PC-9 (cell line): ENCODE measurements at regions of chr7 and their contacts with region 1.

Region 1: DNA sequence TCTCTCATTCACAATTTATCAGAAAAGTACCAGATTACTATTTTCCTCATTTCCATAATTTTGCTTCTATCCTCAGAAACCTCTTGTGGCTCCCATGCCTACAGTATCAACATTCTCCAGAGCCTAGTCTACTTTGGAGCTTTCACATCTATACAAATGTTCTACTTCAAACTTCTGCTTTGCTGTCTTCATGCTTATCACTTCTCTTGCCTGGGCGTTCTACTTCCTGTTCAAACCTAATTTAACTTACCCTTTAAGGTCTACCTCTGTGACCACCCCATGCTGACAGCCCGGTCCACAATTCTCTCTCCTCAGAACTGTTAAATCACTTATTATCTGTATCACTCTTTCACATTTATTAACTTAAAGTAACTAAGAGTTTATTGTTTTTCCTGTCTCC is 6.1 kb upstream of the PTPN12 start:
- DNase-seq: no peak
- H3K4me3 ChIP-seq: no peak overlapping the region
- H3K27ac ChIP-seq: peak overlapping the region; percentile 51; the same call in 1 of the 2 replicates
- H3K4me1 ChIP-seq: peaks cover 36% of the 10 kb centered on the region
- H3K27me3 ChIP-seq: no peaks in the 10 kb centered on the region
- CTCF ChIP-seq: no peak

Region 2: DNA sequence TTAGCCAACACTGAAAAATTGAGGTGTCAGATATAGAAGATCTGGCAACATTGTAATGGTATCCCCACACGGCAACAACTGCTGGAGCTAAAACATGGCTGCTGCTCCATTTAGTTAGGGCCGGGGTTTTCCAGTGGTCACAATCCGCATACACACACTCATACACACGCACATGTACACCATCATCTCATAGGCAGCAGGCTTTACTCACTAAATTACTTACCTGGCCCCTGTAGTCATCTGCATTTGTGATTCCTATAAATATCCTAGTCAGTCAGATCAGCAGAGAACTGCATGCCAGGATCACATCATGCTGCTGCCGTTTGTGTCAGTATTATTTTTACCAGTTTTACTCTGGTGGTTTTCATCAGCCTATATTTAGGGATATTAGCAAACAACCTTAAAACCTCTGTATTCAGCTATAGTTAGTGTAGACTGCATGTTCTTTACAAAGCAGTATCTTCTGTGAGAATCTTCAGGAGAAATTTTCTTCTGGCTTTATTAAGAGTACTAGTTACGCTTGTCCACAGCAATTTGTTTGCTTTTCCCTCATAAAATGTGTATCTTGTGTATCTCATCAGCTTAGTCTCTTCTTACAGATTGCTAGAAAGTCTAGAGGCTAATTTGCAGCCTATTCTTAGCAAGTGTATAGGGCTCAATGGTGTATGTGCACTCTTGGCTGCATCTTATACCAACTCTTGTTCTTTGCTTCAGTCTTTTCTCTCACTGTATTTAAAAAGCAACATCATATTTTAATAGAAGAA is 32.2 kb before region 1 on chr7:
- CTCF ChIA-PET with region 1: no interaction called
- POLR2A ChIA-PET with region 1: no interaction called
- intact Hi-C with region 1: no loop called
- DNase-seq: no peak
- H3K4me3 ChIP-seq: no peak overlapping the region
- H3K27ac ChIP-seq: no peak overlapping the region
- H3K4me1 ChIP-seq: peaks cover 7% of the 10 kb centered on the region
- H3K27me3 ChIP-seq: no peaks in the 10 kb centered on the region
- CTCF ChIP-seq: no peak

Region 3: GRCh38 chr7:77606562-77606961 is 75.5 kb after region 1 on chr7:
- CTCF ChIA-PET with region 1: no interaction called
- POLR2A ChIA-PET with region 1: interaction called, 11 read pairs
- intact Hi-C with region 1: no loop called
- DNase-seq: no peak
- H3K4me3 ChIP-seq: no peak overlapping the region
- H3K27ac ChIP-seq: 0 out of 2 replicates have a peak overlapping the region, but pooled peaks have one; percentile 5
- H3K4me1 ChIP-seq: peaks cover 16% of the 10 kb centered on the region
- H3K27me3 ChIP-seq: no peaks in the 10 kb centered on the region
- CTCF ChIP-seq: no peak

Region 4: GRCh38 chr7:77822269-77822668 is 291.2 kb after region 1 on chr7:
- CTCF ChIA-PET with region 1: no interaction called
- POLR2A ChIA-PET with region 1: interaction called, 36 read pairs
- intact Hi-C with region 1: no loop called
- DNase-seq: no peak
- H3K4me3 ChIP-seq: no peak overlapping the region
- H3K27ac ChIP-seq: no peak overlapping the region
- H3K4me1 ChIP-seq: no peaks in the 10 kb centered on the region
- H3K27me3 ChIP-seq: no peaks in the 10 kb centered on the region
- CTCF ChIP-seq: no peak